ENCODE measurements at regions of chr15 and their contacts with region 1.

Region 1: GRCh38 chr15:75684642-75685041 is 28.0 kb downstream of the CSPG4 start:
- DNase-seq: no peak
- H3K4me3 ChIP-seq: no peak overlapping the region
- H3K27ac ChIP-seq: no peak overlapping the region
- H3K4me1 ChIP-seq: peaks cover 4 to 7% of the 10 kb centered on the region in 2 donors
- H3K27me3 ChIP-seq: no peaks in the 10 kb centered on the region
- CTCF ChIP-seq: no peak
- POLR2A ChIP-seq: no peak

Region 2: GRCh38 chr15:75367913-75368688 is 316.5 kb before region 1 on chr15 and contains the start of gene MAN2C1:
- intact Hi-C with region 1: loop called (anchors 5 kb)
- DNase-seq: peak; percentile 98
- H3K4me3 ChIP-seq: peak within 1 kb of the TSS; percentile 58 to 88 (median 87)
- H3K27ac ChIP-seq: peak within 1 kb of the TSS; percentile 88 to 95 (median 91)
- H3K4me1 ChIP-seq: peaks cover 13 to 18% of the 10 kb centered on the region in 2 donors
- H3K27me3 ChIP-seq: no peaks in the 10 kb centered on the region
- CTCF ChIP-seq: peak in 5 of 6 experiments; percentile 10 to 88 (median 78)
- POLR2A ChIP-seq: peak; percentile 46 to 90
- total RNA-seq, gene MAN2C1: 200 to 357 (median 226) TPM

Region 3: DNA sequence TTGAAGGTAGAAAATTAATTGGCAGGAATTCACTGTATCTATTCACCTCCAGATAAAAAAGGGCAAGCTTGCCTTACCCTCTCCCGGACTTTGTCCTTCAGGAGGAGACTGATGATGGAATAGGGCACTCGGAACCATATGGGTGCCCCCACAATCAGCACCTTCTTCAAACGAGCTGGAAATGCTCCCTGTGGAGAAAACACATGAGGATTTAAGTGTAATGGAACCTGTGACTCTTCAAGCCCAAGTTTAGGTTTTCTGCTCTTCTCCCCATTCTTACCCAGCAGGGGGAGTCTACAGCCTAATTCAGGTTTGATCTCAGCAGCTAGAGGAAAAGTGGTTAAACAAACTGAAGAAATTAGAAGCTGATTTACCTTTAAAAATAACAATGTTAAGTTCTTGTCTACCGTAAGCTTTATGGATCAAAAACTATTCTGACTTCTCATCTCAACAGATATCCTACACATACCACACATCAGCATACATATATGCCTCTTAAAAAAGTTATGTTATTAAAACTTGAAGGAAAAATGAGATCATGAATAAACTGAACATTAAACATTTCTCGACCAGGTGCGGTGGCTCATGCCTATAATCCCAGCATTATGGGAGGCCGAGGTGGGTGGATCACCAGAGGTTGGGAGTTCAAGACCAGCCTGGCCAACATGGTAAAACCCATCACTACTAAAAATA is 175.7 kb before region 1 on chr15:
- intact Hi-C with region 1: loop called (anchors 10 kb)
- DNase-seq: no peak
- H3K4me3 ChIP-seq: no peak overlapping the region
- H3K27ac ChIP-seq: no peak overlapping the region
- H3K4me1 ChIP-seq: no peaks in the 10 kb centered on the region
- H3K27me3 ChIP-seq: no peaks in the 10 kb centered on the region
- CTCF ChIP-seq: peak in 4 of 6 experiments; percentile 42 to 66 (median 52)
- POLR2A ChIP-seq: no peak

Region 4: DNA sequence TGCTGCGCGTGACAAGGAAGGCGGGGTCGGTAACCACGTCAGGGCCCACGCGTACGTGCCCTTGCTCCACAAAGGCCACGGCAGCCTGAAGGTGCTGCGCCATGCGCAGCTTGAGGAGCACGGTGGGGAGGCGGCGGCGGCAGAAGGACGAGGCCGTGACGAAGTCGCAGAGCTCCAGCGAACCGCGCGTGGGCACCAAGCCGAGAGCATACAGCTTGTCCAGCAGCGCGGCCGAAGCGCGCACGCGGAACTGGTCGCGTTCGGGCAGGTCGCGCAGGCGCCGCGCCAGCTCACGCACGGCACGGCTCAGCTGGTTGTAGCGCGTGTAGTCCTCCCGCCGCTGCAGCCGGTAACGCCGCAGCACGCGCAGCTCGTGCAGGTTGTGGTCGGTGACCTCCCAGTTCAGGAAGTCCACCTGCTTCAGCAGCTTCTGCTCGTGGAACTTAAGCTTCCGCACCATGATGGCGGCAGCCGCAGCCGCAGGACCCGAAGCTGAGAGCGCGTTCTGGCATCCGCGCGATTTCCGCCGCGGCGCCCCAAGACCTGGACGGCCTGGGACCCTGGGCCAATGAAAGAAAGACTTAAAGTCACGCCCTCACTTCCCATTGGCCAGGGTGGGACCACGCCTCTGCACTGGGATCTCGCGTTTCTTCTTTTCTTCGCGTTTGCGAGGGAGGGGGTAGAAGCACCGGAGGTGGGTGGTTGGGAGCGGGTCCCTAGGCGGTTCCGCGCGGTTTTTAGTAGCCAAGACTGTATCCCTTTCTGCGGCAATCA is 44.7 kb before region 1 on chr15 and contains the start of gene IMP3:
- intact Hi-C with region 1: loop called (anchors 10 kb)
- DNase-seq: peak; percentile 96 to 97
- H3K4me3 ChIP-seq: peak within 1 kb of the TSS; percentile 53 to 94 (median 71)
- H3K27ac ChIP-seq: peak within 1 kb of the TSS; percentile 78 to 94 (median 93)
- H3K4me1 ChIP-seq: peaks cover 19 to 36% of the 10 kb centered on the region in 2 donors
- H3K27me3 ChIP-seq: no peaks in the 10 kb centered on the region
- CTCF ChIP-seq: no peak
- POLR2A ChIP-seq: peak; percentile 81 to 98
- total RNA-seq, gene IMP3: 75.2 to 187 (median 133) TPM

Region 5: GRCh38 chr15:75801859-75802593 is 117.4 kb after region 1 on chr15:
- intact Hi-C with region 1: loop called (anchors 5 kb)
- DNase-seq: peak; percentile 78 to 84
- H3K4me3 ChIP-seq: no peak overlapping the region
- H3K27ac ChIP-seq: no peak overlapping the region
- H3K4me1 ChIP-seq: no peaks in the 10 kb centered on the region
- H3K27me3 ChIP-seq: no peaks in the 10 kb centered on the region
- CTCF ChIP-seq: peak; percentile 67 to 97 (median 84)
- POLR2A ChIP-seq: no peak